Dendritic cell treated with granulocyte-macrophage colony-stimulating factor and Interleukin-4, amounts not matched to agents 40 ng/mL and 50 ng/mL, for 4 days (primary cell): ENCODE measurements at regions of chr3 and their contacts with region 1.

Region 1: DNA sequence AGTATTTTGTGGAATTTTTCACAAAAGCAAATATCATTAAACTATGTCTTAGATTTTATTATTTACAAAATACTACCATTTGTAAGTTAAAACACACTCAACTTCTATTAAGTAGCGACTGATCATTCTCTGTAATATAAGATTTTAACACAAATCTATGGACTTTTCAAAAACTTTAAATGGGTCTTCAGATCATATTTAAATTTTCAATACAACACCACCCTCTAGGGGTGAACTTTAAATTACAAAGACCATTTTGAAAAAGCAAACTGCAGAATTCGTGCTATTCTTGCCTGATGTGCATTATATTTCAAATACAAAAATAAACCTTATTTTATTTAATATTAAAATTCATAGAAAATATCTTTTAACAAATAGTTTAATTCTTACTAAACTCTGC is 8.2 kb upstream of the VGLL4 start:
- H3K4me3 Mint-ChIP-seq: no peak overlapping the region
- H3K27ac Mint-ChIP-seq: no peak overlapping the region
- H3K4me1 Mint-ChIP-seq: no peaks in the 10 kb centered on the region
- H3K27me3 Mint-ChIP-seq: peaks cover 3% of the 10 kb centered on the region

Region 2: GRCh38 chr3:10945683-10946287 is 706.1 kb before region 1 on chr3:
- intact Hi-C with region 1: loop called (anchors 10 kb)
- H3K4me3 Mint-ChIP-seq: no peak overlapping the region
- H3K27ac Mint-ChIP-seq: no peak overlapping the region
- H3K4me1 Mint-ChIP-seq: no peaks in the 10 kb centered on the region
- H3K27me3 Mint-ChIP-seq: peaks cover 23% of the 10 kb centered on the region

Region 3: DNA sequence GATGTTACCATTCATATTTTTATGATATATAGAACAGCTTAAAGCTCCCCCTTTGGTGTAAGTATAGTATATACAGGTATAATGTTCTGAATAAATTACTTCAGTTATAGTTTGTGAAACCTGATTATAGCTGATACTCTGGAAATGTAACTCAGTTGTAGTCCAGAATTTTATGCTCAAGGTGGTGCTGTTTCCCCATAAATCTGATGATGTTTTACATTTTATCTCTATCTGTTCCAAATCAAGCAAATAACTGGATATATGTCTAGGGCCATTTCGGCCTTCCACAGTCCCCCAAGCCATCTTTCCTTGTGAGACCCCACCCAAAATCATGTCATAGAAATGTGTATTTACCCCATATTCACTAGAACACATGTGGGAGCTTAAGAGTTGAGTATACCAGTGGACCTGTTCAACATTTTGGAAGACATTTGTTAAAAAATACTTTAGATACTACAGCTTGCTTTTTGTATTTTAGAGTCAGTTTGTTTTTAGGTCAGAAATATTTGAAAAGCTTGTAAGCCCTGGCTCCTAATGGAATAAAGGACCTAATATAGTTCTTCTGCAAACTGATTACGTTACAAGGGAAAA is 272.6 kb before region 1 on chr3:
- intact Hi-C with region 1: loop called (anchors 1 kb)
- H3K4me3 Mint-ChIP-seq: no peak overlapping the region
- H3K27ac Mint-ChIP-seq: no peak overlapping the region
- H3K4me1 Mint-ChIP-seq: peaks cover 12% of the 10 kb centered on the region
- H3K27me3 Mint-ChIP-seq: no peaks in the 10 kb centered on the region

Region 4: GRCh38 chr3:11582191-11582968 is 69.5 kb before region 1 on chr3:
- intact Hi-C with region 1: no loop called
- H3K4me3 Mint-ChIP-seq: peak overlapping the region; percentile 44
- H3K27ac Mint-ChIP-seq: no peak overlapping the region
- H3K4me1 Mint-ChIP-seq: peaks cover 35% of the 10 kb centered on the region
- H3K27me3 Mint-ChIP-seq: no peaks in the 10 kb centered on the region

Region 5: GRCh38 chr3:11601446-11602238 is 50.3 kb before region 1 on chr3:
- intact Hi-C with region 1: no loop called
- H3K4me3 Mint-ChIP-seq: no peak overlapping the region
- H3K27ac Mint-ChIP-seq: no peak overlapping the region
- H3K4me1 Mint-ChIP-seq: peaks cover 5% of the 10 kb centered on the region
- H3K27me3 Mint-ChIP-seq: no peaks in the 10 kb centered on the region

Region 6: DNA sequence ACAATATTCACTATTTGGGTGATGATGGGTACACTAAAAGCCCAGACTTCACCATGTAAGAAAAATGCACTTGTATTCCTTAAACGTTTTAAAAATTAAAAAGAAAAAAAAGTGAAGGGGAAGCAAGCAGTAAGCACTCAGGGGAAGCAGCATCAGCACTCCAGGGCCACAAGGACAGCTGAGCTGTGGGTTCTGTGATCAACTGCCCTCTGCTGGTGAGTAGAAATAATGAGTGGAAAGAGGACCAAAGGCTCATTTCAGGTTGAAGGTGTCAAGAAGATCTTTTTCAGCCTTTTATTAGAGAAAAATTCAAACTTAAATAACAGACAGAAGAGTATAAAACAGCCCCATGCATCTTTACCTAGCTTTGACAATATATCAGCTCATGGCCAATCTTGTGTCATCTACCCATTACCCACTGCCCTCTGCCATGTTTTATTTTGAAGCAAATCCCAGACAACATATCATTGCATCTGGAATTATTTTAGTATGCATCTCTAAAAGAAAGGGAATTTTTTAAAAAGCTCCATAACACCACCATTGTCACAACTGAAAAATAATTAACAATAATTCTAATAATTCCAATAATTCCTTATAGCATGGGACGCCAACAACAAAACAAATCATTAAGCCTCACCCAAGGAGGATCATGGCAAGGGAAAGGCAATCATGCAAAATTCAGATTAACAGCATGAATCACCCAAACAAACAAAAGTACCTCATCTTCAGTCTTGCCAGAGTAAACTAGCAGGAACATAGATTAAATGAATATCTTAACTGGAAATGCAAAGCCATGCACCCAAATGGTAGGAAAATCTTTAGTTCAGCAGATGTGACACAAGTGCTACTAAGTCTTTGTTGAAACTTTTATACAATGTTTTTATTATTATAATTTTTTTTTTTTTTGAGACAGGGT is 152.3 kb after region 1 on chr3:
- intact Hi-C with region 1: loop called (anchors 5 kb)
- H3K4me3 Mint-ChIP-seq: no peak overlapping the region
- H3K27ac Mint-ChIP-seq: no peak overlapping the region
- H3K4me1 Mint-ChIP-seq: no peaks in the 10 kb centered on the region
- H3K27me3 Mint-ChIP-seq: no peaks in the 10 kb centered on the region

Region 7: GRCh38 chr3:11835028-11835639 is 183.2 kb after region 1 on chr3:
- intact Hi-C with region 1: no loop called
- H3K4me3 Mint-ChIP-seq: no peak overlapping the region
- H3K27ac Mint-ChIP-seq: no peak overlapping the region
- H3K4me1 Mint-ChIP-seq: no peaks in the 10 kb centered on the region
- H3K27me3 Mint-ChIP-seq: no peaks in the 10 kb centered on the region

Region 8: GRCh38 chr3:12613250-12613649 is 961.4 kb after region 1 on chr3:
- intact Hi-C with region 1: no loop called
- H3K4me3 Mint-ChIP-seq: no peak overlapping the region
- H3K27ac Mint-ChIP-seq: no peak overlapping the region
- H3K4me1 Mint-ChIP-seq: peaks cover 12% of the 10 kb centered on the region
- H3K27me3 Mint-ChIP-seq: no peaks in the 10 kb centered on the region